CD4-positive, alpha-beta T cell (primary cell): ENCODE measurements at regions of chr1 and their contacts with region 1.

Region 1: DNA sequence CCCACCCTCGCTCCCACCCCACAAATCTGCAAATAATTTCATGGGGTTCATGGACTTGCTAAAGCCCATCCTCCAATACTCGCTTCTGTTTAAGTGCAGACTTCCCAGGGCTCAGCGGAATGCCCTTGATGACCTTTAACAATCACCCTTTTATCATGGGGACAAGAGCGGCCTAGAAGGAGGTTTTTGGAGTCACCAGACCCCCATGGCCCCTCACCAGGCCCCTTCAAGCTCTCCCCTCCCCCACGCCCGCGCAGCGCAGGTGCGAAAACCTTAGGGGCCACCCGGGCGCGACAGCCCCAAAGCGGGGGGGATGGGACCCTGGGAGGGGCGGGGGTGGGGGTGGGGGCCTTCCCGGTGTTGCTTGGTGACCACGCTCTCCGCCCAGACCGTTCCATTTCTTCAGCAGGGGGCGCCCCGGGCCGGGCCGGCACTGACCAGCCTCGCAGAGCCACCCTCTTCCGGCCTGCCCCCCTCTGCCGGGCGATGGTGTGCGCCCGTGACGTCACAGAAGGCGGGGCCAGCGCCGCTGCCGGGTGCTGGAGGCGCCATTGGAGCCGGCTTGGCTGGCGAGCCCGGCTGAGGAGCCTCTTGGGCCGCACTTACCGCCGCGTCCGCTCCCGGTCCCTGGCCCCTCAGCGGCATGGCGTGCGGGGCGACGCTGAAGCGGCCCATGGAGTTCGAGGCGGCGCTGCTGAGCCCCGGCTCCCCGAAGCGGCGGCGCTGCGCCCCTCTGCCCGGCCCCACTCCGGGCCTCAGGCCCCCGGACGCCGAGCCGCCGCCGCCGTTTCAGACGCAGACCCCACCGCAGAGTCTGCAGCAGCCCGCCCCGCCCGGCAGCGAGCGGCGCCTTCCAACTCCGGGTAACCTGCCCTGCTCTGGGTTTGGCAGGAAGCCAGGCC is at the start of gene AKIRIN1:
- DNase-seq: peak; percentile 82 to 96 (median 92)
- ATAC-seq: peak; percentile 84
- H3K4me3 ChIP-seq: peak within 1 kb of the TSS; percentile 91
- H3K4me3 Mint-ChIP-seq: peak within 1 kb of the TSS; percentile 90
- H3K27ac ChIP-seq: peak within 1 kb of the TSS; percentile 83 to 89
- H3K27ac Mint-ChIP-seq: peak within 1 kb of the TSS; percentile 81
- H3K4me1 ChIP-seq: peaks cover 36% of the 10 kb centered on the region
- H3K4me1 Mint-ChIP-seq: peaks cover 43% of the 10 kb centered on the region
- H3K27me3 ChIP-seq: no peaks in the 10 kb centered on the region
- H3K27me3 Mint-ChIP-seq: no peaks in the 10 kb centered on the region
- CTCF ChIP-seq: no peak
- total RNA-seq, gene AKIRIN1: 108 to 112 TPM

Region 2: DNA sequence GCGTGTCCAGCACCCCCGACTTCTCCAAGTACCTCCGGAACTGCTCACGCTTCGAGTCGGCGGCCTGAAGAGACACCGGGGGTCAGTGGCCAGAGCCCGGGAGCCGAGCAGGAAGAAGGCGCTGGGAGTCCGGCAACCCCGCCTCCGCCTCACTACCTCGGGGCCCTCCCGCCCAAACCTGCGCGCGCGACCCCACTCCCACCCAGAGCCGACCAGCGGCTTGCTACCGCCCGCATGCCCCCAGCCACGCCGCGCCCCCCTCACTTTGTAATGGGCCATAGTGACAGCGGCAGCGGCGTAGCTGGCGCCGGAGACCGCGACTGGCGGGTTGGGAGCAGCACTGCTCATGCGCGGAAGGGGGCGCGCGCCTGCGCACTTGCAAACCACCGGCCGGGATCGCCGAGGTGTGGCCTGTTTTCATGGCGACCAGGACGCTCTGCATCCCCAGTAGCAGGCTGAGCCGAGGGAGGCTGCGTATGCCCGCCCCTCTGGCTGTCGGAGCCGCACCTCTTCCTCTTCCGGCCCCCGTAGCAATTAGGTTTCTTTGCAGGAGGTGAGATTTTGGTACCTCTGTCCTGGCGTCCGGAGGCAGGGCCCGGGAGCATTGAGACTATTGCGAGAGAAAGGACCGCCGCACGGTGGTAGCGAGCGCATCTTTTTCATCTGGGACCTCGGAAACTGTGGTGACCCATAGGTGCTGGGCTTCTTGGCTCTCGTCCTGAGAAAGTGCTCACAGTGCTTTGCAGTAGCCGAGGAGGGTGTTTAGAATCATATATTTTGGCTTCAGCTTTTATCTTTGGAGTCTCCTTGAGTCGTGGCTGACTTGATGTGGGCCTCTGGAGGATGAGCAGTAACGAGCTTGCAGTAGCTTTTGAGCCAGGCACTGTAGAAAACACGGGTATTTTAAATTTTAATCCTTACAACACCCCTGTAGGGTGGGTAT is 117.7 kb before region 1 on chr1 and contains the start of gene MYCBP:
- CTCF ChIA-PET with region 1: no interaction called
- POLR2A ChIA-PET with region 1: no interaction called
- intact Hi-C with region 1: loop called (anchors 2 to 5 kb)
- DNase-seq: peak; percentile 94 to 99 (median 97)
- ATAC-seq: peak; percentile 99
- H3K4me3 ChIP-seq: peak within 1 kb of the TSS; percentile 71
- H3K4me3 Mint-ChIP-seq: peak within 1 kb of the TSS; percentile 93
- H3K27ac ChIP-seq: peak within 1 kb of the TSS; percentile 13 to 73
- H3K27ac Mint-ChIP-seq: peak within 1 kb of the TSS; percentile 90
- H3K4me1 ChIP-seq: peaks cover 17% of the 10 kb centered on the region
- H3K4me1 Mint-ChIP-seq: peaks cover 34% of the 10 kb centered on the region
- H3K27me3 ChIP-seq: no peaks in the 10 kb centered on the region
- H3K27me3 Mint-ChIP-seq: no peaks in the 10 kb centered on the region
- CTCF ChIP-seq: no peak
- total RNA-seq, gene MYCBP: 1.5 to 2.2 TPM